ENCODE measurements at regions of chr3 and their contacts with region 1.

Region 1: DNA sequence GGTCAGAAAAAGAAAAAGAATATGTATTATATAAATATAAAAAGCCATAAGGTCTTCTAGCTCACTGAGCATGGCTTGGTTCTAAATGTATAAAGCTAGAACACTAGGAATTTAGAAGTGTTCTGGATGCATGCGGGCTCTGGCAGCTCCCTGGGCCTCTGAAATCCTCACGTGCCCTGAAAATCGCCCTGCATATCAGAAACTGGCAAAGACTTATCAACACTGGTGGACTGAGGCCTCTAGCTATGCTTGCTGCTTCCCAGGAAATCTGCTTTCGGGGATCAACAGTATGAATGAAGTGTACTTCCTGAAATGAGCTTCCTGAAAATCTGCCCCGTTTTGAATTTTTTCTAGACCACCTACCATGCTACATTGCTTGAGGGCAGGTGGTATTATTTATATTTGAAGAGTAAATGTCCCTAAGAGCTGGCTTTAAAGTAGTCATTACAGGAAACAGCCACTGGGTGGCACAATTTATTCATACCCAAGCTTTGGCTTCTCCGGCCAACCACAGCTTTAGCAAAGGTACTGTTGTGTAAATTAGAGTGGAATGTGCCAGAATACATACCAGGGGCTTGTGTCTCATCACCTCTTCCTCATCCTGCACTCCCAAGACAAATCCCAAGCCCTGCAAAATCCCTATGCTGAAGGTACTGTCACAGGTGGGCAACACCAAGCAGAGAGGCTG is 17.7 kb downstream of the CRTAP start:
- DNase-seq: peak; percentile 60
- ATAC-seq: peak; percentile 64
- H3K4me3 Mint-ChIP-seq: no peak overlapping the region
- H3K27ac Mint-ChIP-seq: no peak overlapping the region
- H3K4me1 Mint-ChIP-seq: peaks cover 12% of the 10 kb centered on the region
- H3K27me3 Mint-ChIP-seq: no peaks in the 10 kb centered on the region

Region 2: GRCh38 chr3:32947789-32948238 is 183.7 kb before region 1 on chr3:
- CTCF ChIA-PET with region 1: interaction called, 12 read pairs
- POLR2A ChIA-PET with region 1: no interaction called
- DNase-seq: peak; percentile 94
- ATAC-seq: peak; percentile 90
- H3K4me3 Mint-ChIP-seq: no peak overlapping the region
- H3K27ac Mint-ChIP-seq: no peak overlapping the region
- H3K4me1 Mint-ChIP-seq: peaks cover 35% of the 10 kb centered on the region
- H3K27me3 Mint-ChIP-seq: peaks cover 3% of the 10 kb centered on the region

Region 3: DNA sequence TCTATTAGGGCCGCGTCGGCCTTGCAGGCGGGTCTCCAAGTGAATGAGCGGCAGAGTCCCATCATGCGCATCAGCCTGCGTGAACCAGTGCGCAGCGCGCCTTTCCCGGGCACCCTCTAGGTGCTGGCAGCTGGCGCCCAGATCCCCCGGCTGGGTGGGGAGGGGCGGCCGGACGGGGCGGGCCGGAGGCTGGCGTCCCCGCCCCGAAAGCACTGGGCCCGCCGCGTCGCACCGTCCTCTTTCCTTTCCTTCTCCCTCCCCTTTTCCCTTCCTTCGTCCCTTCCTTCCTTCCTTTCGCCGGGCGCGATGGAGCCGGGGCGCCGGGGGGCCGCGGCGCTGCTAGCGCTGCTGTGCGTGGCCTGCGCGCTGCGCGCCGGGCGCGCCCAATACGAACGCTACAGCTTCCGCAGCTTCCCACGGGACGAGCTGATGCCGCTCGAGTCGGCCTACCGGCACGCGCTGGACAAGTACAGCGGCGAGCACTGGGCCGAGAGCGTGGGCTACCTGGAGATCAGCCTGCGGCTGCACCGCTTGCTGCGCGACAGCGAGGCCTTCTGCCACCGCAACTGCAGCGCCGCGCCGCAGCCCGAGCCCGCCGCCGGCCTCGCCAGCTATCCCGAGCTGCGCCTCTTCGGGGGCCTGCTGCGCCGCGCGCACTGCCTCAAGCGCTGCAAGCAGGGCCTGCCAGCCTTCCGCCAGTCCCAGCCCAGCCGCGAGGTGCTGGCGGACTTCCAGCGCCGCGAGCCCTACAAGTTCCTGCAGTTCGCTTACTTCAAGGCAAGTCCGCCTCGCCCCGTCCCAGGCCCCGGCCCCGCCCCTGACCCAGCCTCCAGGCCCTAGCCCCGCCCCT is 17.5 kb before region 1 on chr3 and contains the start of gene CRTAP:
- CTCF ChIA-PET with region 1: interaction called, 19 read pairs
- POLR2A ChIA-PET with region 1: no interaction called
- DNase-seq: peak; percentile 86
- ATAC-seq: peak; percentile 93
- H3K4me3 Mint-ChIP-seq: peak within 1 kb of the TSS; percentile 84
- H3K27ac Mint-ChIP-seq: peak within 1 kb of the TSS; percentile 80
- H3K4me1 Mint-ChIP-seq: peaks cover 20% of the 10 kb centered on the region
- H3K27me3 Mint-ChIP-seq: peaks cover 3% of the 10 kb centered on the region
- total RNA-seq, gene CRTAP: 21.2 to 22.5 TPM

Region 4: DNA sequence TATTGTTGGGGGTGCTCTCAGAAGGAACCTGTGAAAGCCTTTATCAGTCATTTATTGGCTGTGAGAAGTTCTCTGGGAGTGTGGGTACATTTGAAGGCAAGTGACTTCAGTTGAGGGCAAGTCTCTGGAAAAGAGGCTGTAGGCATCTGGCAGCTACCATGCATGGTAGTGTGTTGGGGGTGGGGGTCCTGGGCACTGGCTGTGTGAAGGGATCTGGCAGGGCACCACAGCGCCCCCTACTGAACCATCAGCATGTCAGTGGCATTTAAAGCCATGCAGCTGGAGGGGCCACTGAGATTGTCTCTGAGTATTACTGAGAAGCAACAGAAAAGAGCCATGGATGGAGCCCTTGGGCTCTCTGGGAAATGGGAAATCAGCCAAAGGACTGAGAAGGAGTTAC is 13.0 kb after region 1 on chr3:
- CTCF ChIA-PET with region 1: interaction called, 25 read pairs
- POLR2A ChIA-PET with region 1: no interaction called
- DNase-seq: peak; percentile 32
- ATAC-seq: no peak
- H3K4me3 Mint-ChIP-seq: no peak overlapping the region
- H3K27ac Mint-ChIP-seq: no peak overlapping the region
- H3K4me1 Mint-ChIP-seq: no peaks in the 10 kb centered on the region
- H3K27me3 Mint-ChIP-seq: peaks cover 2% of the 10 kb centered on the region

Measured in activated CD8-positive, alpha-beta T cell treated with anti-CD3 and anti-CD28 coated beads, Interleukin-2, amount 10 ng/mL, durations not matched to agents 7 days and 5 days (primary cell).